ENCODE measurements at regions of chr12 and their contacts with region 1.

Region 1: DNA sequence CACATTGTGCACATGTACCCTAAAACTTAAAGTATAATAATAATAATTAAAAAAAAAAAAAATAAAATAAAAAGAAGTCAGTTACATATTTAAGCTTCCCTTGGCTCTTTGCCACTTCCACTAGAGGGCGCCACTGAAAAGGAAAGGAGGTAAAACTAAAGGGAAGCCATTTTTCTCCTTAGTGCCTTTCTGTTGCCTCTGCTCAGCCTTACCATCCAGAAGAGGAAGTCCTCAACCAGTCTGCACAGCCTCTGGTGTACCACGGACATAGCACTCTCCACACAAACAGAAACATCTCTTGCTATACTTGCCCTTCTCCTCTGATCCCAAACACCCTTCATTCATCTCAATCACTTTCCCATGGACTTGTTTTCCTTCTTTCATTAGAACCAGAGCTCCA is 169.0 kb upstream of the EEA1 start:
- DNase-seq: peak in 1 of 2 experiments; percentile 67
- H3K4me3 ChIP-seq: no peak overlapping the region
- H3K27ac ChIP-seq: no peak overlapping the region
- H3K4me1 ChIP-seq: no peaks in the 10 kb centered on the region
- H3K27me3 ChIP-seq: no peaks in the 10 kb centered on the region
- CTCF ChIP-seq: peak in 2 of 3 experiments; percentile 50 to 60; a peak in 2 of 4 replicates
- EP300 ChIP-seq: no peak
- POLR2A ChIP-seq: no peak
- RAD21 ChIP-seq: peak; percentile 69 to 72

Region 2: GRCh38 chr12:93042283-93042682 is 55.8 kb before region 1 on chr12:
- CTCF ChIA-PET with region 1: interaction called, 11 read pairs
- POLR2A ChIA-PET with region 1: no interaction called
- DNase-seq: no peak
- H3K4me3 ChIP-seq: no peak overlapping the region
- H3K27ac ChIP-seq: no peak overlapping the region
- H3K4me1 ChIP-seq: no peaks in the 10 kb centered on the region
- H3K27me3 ChIP-seq: no peaks in the 10 kb centered on the region
- CTCF ChIP-seq: no peak
- EP300 ChIP-seq: no peak
- POLR2A ChIP-seq: no peak
- RAD21 ChIP-seq: no peak

Region 3: GRCh38 chr12:93109551-93110203 is 11.6 kb after region 1 on chr12:
- CTCF ChIA-PET with region 1: interaction called, 56 read pairs
- POLR2A ChIA-PET with region 1: no interaction called
- DNase-seq: no peak
- H3K4me3 ChIP-seq: no peak overlapping the region
- H3K27ac ChIP-seq: no peak overlapping the region
- H3K4me1 ChIP-seq: peaks cover 0 to 3% (median 0%) of the 10 kb centered on the region in 4 experiments; a peak in 2 of 7 replicates
- H3K27me3 ChIP-seq: no peaks in the 10 kb centered on the region
- CTCF ChIP-seq: no peak
- EP300 ChIP-seq: no peak
- POLR2A ChIP-seq: no peak
- RAD21 ChIP-seq: no peak

Region 4: DNA sequence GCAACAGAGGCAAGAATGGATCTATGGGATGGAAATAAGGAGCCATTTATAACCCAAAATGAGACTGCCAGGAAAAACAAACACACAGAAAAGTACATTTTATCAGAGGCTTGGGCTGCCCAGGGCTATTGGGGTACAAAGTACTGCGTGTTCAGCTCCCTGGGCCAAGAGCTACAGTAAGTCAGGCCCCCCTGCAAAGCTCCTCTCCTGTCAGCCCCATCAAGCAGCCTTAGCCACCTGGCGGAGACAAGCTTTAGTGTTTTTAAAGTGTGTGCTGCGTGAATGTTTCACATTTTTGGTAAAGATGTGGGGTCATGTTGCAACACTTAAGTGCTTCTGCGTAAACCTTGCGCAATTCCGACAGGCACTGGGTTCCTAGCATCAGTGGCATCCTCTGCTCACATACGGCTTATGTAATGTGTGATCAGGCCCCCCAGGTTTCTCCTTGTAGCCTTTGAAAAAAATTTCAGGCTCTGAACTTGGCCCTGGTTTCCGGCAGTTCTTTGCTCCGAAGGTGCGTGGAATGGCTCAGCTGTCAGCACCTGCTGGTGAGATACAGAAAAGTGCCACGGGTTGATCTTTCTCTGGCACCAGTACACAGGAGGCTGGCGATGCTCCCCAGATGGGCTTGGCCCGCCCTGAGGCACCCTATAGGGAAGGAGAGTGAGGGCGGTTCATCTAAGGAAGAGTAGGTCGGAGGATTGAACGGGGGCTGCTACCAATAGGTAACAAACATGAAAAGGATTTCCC is 29.7 kb after region 1 on chr12:
- CTCF ChIA-PET with region 1: interaction called, 13 read pairs
- POLR2A ChIA-PET with region 1: no interaction called
- DNase-seq: peak in 1 of 2 experiments; percentile 49
- H3K4me3 ChIP-seq: no peak overlapping the region
- H3K27ac ChIP-seq: no peak overlapping the region
- H3K4me1 ChIP-seq: no peaks in the 10 kb centered on the region
- H3K27me3 ChIP-seq: no peaks in the 10 kb centered on the region
- CTCF ChIP-seq: peak in 2 of 3 experiments; percentile 18 to 20; a peak in 2 of 4 replicates
- EP300 ChIP-seq: no peak
- POLR2A ChIP-seq: no peak
- RAD21 ChIP-seq: peak; percentile 24 to 45; a peak in 3 of 4 replicates

Region 5: GRCh38 chr12:93256256-93256969 is 158.3 kb after region 1 on chr12:
- CTCF ChIA-PET with region 1: no interaction called
- POLR2A ChIA-PET with region 1: no interaction called
- DNase-seq: no peak
- H3K4me3 ChIP-seq: no peak overlapping the region
- H3K27ac ChIP-seq: no peak overlapping the region
- H3K4me1 ChIP-seq: peaks cover 0 to 2% (median 0%) of the 10 kb centered on the region in 4 experiments; a peak in 1 of 7 replicates
- H3K27me3 ChIP-seq: no peaks in the 10 kb centered on the region
- CTCF ChIP-seq: no peak
- EP300 ChIP-seq: no peak
- POLR2A ChIP-seq: no peak
- RAD21 ChIP-seq: no peak

Region 6: GRCh38 chr12:93279565-93280412 is 181.7 kb after region 1 on chr12:
- CTCF ChIA-PET with region 1: interaction called, 10 read pairs
- POLR2A ChIA-PET with region 1: no interaction called
- DNase-seq: no peak
- H3K4me3 ChIP-seq: no peak overlapping the region
- H3K27ac ChIP-seq: no peak overlapping the region
- H3K4me1 ChIP-seq: no peaks in the 10 kb centered on the region
- H3K27me3 ChIP-seq: no peaks in the 10 kb centered on the region
- CTCF ChIP-seq: no peak
- EP300 ChIP-seq: no peak
- POLR2A ChIP-seq: no peak
- RAD21 ChIP-seq: no peak

Region 7: DNA sequence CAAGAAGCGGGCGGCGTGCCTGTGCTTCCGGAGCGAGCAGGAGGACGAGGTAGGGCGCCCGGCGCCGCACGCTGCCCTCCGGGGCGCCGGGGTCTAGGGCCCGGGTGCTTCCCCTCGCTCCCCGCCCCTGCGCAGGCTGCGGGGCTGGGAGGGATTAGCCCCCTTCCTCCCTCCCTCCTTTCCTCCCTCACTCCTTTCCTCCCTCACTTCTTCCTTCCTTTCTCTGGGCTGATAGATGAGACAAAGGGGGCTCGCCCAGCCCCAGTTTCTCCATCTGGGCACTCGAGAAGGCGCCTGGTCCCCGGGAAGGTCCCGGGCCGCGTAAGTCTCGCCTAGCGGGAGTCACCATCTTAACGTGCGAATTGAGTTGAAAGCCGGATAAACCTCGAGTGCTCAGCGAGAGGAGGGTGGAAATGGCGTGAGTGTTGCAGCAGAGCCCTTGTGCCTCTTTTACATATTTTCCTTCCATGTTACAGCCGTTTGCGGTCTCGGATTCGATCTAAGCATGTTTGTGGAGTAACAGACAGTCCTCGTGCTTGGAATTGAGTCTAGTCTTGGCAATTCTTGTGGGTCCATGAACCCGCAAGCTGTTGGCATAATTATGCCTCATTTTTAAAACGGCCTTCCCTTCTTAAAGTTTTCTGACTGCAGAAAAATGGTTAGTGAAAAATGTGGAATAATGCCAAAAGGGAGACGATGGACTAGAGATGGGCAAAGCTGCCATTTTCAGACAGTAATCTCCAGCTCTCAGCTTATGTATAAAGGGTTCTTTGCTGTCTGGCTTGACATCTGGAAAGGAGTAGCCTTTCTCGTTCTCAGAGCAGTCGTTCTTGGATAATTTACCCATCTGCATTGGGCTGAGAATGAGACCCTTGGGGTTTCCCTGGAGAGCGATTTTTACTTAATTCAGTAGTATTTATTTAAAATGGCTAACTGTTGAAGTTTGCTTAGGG is 280.6 kb after region 1 on chr12:
- CTCF ChIA-PET with region 1: interaction called, 16 read pairs
- POLR2A ChIA-PET with region 1: no interaction called
- DNase-seq: peak in 1 of 2 experiments; percentile 66
- H3K4me3 ChIP-seq: peak overlapping the region; percentile 59 to 96 (median 82)
- H3K27ac ChIP-seq: 0 out of 2 replicates have a peak overlapping the region, but pooled peaks have one; percentile 16
- H3K4me1 ChIP-seq: peaks cover 13 to 20% (median 15%) of the 10 kb centered on the region in 4 experiments; a peak in 6 of 7 replicates
- H3K27me3 ChIP-seq: no peaks in the 10 kb centered on the region
- CTCF ChIP-seq: no peak
- EP300 ChIP-seq: no peak
- POLR2A ChIP-seq: peak in 1 of 2 experiments; percentile 75; a peak in 1 of 3 replicates
- RAD21 ChIP-seq: no peak

Region 8: DNA sequence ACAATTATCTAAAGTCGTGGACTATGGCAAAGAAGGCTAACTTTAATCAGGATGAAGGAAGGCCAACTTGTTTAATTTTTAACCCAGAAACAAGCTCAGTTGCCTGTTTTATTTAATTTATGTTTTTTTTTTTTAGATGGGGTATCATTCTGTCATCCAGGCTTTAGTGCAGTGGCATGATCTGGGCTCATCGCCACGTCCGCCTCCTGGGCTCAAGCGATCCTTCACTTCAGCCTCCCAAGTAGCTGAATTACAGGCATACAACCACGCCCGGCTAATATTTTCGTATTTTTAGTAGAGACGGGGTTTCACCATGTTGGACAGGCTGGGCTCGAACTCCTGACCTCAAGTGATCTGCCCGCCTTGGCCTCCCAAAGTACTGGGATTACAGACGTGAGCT is 299.3 kb after region 1 on chr12:
- CTCF ChIA-PET with region 1: interaction called, 14 read pairs
- POLR2A ChIA-PET with region 1: no interaction called
- DNase-seq: no peak
- H3K4me3 ChIP-seq: no peak overlapping the region
- H3K27ac ChIP-seq: no peak overlapping the region
- H3K4me1 ChIP-seq: no peaks in the 10 kb centered on the region
- H3K27me3 ChIP-seq: no peaks in the 10 kb centered on the region
- CTCF ChIP-seq: no peak
- EP300 ChIP-seq: no peak
- POLR2A ChIP-seq: no peak
- RAD21 ChIP-seq: no peak